Posterior cingulate gyrus (tissue), 11 donors: ENCODE measurements at regions of chr12 and their contacts with region 1.

Region 1: GRCh38 chr12:114662512-114663177 is 21.3 kb downstream of the TBX3 start:
- DNase-seq: peak; percentile 46 to 96 (median 84)

Region 2: DNA sequence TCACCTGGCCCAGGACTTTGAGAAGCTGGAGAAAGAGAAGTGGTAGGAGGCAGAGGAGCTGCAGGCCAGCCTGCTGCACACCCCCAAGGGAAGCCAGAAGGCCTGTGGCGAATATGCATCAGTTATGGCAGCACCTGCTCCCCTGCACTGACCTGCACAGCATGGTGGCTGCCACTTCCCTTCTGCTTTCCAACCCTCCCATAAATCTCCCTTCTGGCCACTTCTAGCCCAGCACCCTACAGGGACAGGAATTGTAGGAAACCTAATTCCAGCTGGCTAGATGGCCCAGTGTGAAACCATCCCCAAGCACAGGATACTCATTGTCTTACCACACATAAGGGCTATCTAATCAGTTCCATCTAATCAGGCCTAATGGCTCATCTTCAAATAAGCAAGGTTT is 115.0 kb before region 1 on chr12:
- intact Hi-C with region 1: no loop called
- DNase-seq: no peak

Region 3: DNA sequence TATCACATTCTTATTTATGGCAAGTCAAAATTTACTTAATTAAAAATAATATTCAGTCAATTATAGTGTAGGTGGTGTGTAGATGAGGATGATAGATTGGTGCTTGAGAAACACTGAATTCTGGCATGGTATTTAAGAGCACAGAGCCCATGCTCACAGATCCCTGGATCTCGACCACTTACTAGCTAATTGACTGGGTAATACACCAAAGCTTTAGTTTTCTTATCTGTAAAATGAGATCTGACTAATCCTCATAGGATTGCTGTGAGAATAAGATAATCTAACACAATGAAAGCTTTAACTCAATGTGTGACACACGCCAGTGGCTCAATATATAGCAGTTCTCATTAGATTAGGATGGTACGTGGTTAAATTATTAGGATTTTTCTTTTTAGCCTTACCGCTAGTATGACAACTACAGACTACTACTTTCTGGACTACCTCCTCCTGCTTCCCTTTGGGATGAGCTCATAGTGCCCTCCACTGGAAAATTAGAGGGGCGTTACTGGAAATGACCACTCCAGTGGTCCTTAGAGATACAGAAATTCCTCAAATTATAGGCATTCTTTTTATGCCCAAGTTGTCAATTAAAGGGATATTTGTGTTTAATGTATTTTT is 504.2 kb after region 1 on chr12:
- intact Hi-C with region 1: loop called (anchors 10 kb)
- DNase-seq: no peak

Region 4: DNA sequence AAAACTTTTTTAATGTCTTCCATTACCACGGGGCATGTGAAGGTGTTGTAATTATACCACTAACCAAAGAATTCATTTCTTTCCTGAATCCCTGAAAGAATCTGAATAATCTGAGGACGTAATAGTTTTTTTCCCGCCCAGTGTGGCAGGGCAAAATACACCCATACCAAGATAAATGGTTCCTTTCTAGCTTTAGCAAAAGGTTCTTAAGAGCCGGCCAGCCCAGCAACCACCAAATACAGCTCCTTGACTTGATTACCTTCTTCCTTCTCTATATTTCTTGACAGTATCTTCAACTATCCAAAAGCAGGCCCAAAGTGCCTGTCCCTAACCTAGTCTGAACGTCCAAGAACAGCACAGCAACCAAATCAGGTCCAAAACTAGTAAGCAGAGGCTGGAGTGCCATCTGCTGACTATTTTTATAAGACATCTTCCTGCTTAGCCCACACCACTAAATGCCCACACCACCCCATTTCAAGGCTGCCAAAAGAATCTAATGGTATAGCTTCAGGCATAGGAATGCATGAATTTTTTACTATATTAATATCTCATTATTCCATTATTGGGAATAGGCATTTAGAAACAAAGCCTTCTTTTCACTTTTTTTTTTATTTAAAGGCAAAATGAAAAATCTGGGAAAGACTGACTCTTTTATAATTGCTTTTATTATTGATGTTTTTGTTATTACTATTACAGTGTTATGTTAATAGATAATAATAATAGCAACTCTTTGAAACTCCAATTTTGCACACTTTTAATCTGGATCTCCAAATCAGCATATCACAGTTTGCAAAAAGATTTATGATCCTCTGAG is 1090.5 kb after region 1 on chr12:
- intact Hi-C with region 1: loop called (anchors 1 kb)
- DNase-seq: peak in 4 of 10 donors; percentile 7 to 32 (median 30)

Region 5: DNA sequence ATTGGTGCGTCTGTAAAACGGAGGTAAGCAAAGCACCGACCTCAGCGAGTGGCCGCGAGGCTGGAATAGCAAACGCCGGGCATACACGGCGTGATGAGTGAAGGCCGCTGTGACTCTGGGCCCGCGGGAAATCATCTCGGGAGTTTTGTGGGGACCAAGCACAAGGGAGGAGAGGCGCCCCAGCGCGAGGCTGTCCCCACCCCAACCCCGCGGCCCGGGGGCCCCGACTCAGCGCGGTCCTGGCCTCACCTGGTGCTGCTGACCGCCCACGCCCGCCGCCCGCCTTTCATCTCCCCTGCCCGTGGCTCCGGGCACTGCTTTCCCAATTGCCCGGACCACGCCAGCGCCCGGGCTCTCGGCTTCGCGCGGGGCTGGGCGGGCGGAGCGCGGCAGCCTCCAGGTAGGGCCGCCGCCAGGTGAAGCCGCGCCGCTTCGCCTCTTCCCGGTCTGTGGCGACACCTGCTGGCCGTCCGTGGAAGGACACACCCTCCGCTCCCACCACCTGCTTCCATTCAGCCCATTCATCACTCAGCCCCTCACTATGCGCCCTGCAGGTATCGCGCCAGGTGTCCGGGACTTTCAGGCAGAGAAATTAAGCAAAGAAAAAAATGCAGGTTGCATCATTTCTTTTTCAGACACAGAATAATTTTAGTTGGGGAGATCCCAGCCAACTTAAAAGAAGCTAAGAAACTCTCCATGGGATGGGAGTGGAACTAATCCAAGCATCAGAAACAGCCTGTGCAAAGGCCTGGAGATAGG is 1254.4 kb after region 1 on chr12:
- intact Hi-C with region 1: loop called (anchors 1 kb)
- DNase-seq: peak; percentile 28 to 94 (median 69)